Right ventricle myocardium inferior (tissue), 1 donor: ENCODE measurements at regions of chr16 and their contacts with region 1.

Region 1: GRCh38 chr16:54239456-54239855 is 47.1 kb downstream of the IRX3 start:
- DNase-seq: peak; percentile 73
- ATAC-seq: peak; percentile 85

Region 2: DNA sequence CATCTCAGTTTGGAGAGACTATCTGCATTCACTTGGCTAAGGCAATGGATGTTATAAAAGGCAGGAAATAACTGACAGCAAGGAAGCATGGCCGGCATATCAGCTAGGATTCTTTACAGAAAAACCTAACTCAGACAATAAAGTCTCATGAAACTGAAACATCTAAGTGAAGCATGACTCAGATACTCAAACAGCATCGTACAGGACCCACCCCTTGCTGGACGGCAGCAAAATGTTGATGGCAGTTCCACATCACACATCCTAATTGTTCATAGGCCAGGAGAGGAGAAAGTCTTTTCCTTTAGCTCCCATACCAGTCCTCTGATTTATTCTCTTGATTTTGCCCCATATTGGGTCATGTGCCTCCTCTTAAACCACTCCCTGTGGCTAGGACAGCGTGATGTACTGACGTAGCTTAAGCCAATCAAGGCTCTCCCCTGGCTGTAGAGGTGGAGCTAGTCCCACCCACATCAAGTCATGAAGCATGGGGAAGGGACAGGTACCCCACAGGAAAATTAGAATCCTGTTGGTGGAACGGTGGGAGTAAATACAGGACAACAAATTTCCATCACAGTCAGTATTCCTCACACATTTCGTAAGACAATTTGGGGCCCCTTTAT is 131.8 kb before region 1 on chr16:
- intact Hi-C with region 1: no loop called
- DNase-seq: no peak
- ATAC-seq: no peak

Region 3: GRCh38 chr16:54266363-54266955 is 27.0 kb after region 1 on chr16:
- intact Hi-C with region 1: loop called (anchors 2 kb)
- DNase-seq: no peak
- ATAC-seq: peak; percentile 80